GM10248 (cell line): ENCODE measurements at regions of chr2 and their contacts with region 1.

Region 1: GRCh38 chr2:203225423-203226039 is 13.3 kb upstream of the CYP20A1 start:
- DNase-seq: no peak
- CTCF ChIP-seq: peak; percentile 38

Region 2: DNA sequence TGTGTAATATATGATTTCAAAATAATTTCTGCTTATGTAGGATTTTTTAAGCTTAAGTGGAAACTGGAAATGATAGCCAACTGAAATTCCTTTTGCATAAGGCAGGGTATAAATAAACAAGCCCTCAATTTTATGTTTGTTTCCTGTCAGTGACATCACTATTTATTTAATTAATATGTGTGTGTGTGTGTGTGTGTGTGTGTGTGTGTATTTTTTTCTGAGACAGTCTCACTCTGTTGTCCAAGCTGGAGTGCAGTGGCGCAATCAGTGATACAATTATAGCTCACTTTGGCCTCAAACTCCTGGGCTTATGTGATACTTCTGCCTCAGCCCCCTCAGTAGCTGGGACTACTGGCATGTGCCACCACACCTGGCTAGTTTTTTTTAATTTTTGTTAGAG is 16.0 kb before region 1 on chr2:
- CTCF ChIA-PET with region 1: interaction called, 16 read pairs
- POLR2A ChIA-PET with region 1: no interaction called
- DNase-seq: no peak
- CTCF ChIP-seq: no peak

Region 3: GRCh38 chr2:203238704-203239526 is 13.4 kb after region 1 on chr2 and contains the start of gene CYP20A1:
- CTCF ChIA-PET with region 1: interaction called, 30 read pairs
- POLR2A ChIA-PET with region 1: no interaction called
- DNase-seq: peak; percentile 94
- CTCF ChIP-seq: peak; percentile 26

Region 4: DNA sequence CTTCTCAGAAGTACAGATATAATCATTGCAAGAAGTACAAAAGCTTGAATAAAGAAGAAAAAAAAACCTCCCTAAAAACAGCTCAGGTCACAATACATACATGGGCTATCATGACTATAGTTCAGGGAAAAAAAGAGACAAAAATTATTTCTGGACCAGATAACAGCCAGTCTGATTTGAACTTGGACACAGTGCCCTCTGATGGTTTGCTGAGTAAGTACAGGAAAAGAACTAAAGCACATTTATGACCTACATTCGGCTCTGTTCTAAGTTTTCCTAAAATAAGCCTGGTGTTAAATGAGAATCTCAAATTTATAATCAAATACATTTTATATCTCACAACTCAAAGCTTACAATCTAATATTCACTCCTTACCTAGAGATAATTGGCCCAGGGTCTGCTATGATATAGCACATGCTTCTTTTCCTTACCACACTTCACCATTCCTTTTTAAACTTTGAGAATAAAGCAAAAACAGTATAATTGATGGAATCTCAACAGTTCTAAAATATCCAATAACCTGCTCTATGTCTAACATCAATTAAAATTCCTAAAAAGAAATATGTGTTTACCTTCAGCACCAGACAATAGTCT is 228.4 kb after region 1 on chr2:
- CTCF ChIA-PET with region 1: interaction called, 23 read pairs
- POLR2A ChIA-PET with region 1: no interaction called
- DNase-seq: peak; percentile 57
- CTCF ChIP-seq: peak; percentile 64